Dorsolateral prefrontal cortex (tissue), 120 donors: ENCODE measurements at regions of chr11 and their contacts with region 1.

Region 1: GRCh38 chr11:93543292-93543977 is at the start of gene SMCO4:
- DNase-seq: peak; percentile 53 to 87 (median 75)
- H3K4me3 ChIP-seq: peak within 1 kb of the TSS; percentile 52 to 84 (median 69)
- H3K27ac ChIP-seq: peak within 1 kb of the TSS in 57 of 59 donors; percentile 16 to 88 (median 75)
- H3K27me3 ChIP-seq: peaks cover 0 to 5% (median 0%) of the 10 kb centered on the region in 45 donors
- CTCF ChIP-seq: peak; percentile 23 to 83 (median 72)
- total RNA-seq, gene SMCO4: 3.1 to 22.5 (median 10.8) TPM

Region 2: DNA sequence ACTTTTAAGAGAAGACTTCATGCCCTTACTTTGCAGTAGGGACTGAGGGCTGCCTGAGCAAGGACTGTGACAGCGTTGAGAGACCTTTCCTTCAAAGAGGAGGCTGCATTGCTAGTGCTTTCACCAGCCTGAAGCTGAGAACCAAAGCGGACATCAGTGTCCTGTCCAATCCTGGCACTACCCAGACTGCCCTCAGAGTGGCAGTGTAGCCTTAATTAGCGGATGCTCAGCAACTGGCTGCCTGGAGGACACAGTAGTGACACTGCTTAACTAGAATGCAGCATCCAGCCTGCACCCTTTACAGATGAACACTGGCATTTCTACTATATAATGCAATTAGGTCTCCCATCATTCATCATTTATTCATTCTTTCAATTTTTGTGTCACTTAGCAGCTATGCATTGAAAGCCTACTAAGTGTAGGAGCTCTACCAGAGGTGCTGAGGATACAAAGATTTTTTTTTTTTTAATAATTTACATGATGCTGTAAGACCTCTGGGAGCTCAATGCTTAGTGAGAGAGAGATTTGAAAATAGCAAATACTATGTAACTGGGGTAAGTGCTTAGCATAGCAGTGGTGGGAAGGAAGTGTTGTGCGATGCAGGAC is 308.7 kb before region 1 on chr11:
- intact Hi-C with region 1: loop called (anchors 1 to 2 kb)
- DNase-seq: peak; percentile 67 to 92 (median 84)
- H3K4me3 ChIP-seq: no peak overlapping the region
- H3K27ac ChIP-seq: peak overlapping the region in 2 of 59 donors; percentile 6 to 57
- H3K27me3 ChIP-seq: peaks cover 0 to 28% (median 0%) of the 10 kb centered on the region in 45 donors
- CTCF ChIP-seq: peak; percentile 54 to 99 (median 92)

Region 3: GRCh38 chr11:93529707-93530467 is 13.5 kb before region 1 on chr11:
- intact Hi-C with region 1: loop called in 1 of 2 experiments (anchors 2 kb)
- DNase-seq: no peak
- H3K4me3 ChIP-seq: no peak overlapping the region
- H3K27ac ChIP-seq: peak overlapping the region in 53 of 59 donors; percentile 13 to 87 (median 65)
- H3K27me3 ChIP-seq: no peaks in the 10 kb centered on the region
- CTCF ChIP-seq: no peak

Region 4: DNA sequence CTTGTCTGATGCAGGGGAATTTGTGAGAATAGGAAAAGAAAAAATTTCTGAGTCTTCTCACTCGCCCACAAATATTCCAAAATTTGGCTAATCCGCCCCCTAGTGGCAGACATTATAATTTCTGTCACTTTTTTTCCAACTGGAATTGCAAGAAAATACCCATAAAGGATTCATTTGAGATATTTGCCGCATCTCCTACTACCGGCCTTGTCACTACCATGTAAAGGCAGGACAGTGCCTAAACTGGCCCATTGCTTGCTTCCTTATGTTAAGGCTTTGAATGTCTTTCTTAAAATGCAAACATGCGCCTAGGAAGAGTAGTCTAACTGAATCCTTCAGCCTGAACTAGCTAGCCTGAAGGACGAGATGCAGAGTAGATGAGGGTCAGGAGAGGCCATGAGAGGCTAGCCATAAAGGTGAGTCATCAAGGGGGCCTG is 108.7 kb after region 1 on chr11:
- intact Hi-C with region 1: loop called (anchors 2 to 10 kb)
- DNase-seq: peak in 1 of 10 donors; percentile 36
- H3K4me3 ChIP-seq: no peak overlapping the region
- H3K27ac ChIP-seq: no peak overlapping the region
- H3K27me3 ChIP-seq: peaks cover 0 to 5% (median 0%) of the 10 kb centered on the region in 45 donors
- CTCF ChIP-seq: peak; percentile 70 to 99 (median 82)